ENCODE measurements at regions of chr2 and their contacts with region 1.

Region 1: DNA sequence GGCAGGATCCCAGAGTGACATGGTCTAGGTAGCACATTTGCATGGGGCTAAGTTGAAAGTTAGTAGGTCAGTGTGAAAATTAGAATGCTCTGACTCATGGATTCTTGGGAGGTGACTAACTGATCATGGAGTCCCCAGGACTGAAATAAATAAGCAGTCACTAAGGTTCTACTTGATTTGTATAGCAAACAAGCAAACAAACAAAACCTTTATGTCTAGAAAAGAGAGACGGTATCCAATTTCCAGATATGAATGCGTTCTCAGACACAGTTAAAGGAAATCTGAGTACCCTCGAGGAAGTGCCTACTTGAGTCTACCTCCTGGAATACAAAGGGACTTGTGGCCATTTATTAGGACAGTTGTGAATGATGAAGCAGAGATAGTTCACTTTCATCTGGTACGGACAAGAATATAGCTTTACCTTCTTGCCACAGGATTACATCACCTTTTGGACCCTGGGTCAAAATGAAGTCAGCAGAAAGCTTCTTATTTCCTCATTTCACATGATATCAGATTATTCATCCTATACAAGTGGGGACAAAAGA is 54.3 kb upstream of the AGPS start:
- DNase-seq: peak; percentile 41
- ATAC-seq: peak; percentile 63
- H3K4me3 ChIP-seq: no peak overlapping the region
- H3K27ac ChIP-seq: no peak overlapping the region
- H3K4me1 ChIP-seq: peaks cover 2% of the 10 kb centered on the region
- H3K27me3 ChIP-seq: no peaks in the 10 kb centered on the region
- CTCF ChIP-seq: no peak
- EP300 ChIP-seq: no peak
- POLR2A ChIP-seq: no peak
- RAD21 ChIP-seq: no peak

Region 2: GRCh38 chr2:175889701-175890302 is 1448.4 kb before region 1 on chr2:
- CTCF ChIA-PET with region 1: no interaction called
- POLR2A ChIA-PET with region 1: no interaction called
- in situ Hi-C with region 1: no loop called
- intact Hi-C with region 1: no loop called
- DNase-seq: no peak
- ATAC-seq: no peak
- H3K4me3 ChIP-seq: no peak overlapping the region
- H3K27ac ChIP-seq: no peak overlapping the region
- H3K4me1 ChIP-seq: no peaks in the 10 kb centered on the region
- H3K27me3 ChIP-seq: peaks cover 2 to 29% of the 10 kb centered on the region in 2 experiments; a peak in 3 of 5 replicates
- CTCF ChIP-seq: no peak
- EP300 ChIP-seq: no peak
- POLR2A ChIP-seq: no peak
- RAD21 ChIP-seq: no peak

Region 3: DNA sequence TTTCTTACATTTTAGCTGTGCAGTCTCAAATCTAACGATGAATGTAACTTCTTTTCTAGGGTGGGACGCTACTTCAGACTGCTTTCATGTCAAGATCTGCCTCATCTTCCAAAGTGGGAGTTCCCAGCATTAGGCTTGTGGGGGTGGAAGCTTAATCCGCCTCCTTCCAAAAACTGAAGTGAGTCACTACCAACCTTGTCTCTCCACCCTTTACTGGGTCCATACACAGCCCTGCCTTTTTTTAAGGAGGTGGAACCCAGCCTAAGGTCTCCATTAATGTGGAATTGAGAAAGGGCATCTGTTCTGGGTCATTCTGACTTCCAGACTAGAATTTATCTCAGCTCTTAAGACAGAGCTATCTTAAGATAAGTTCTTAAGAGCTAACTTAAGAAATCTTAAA is 31.7 kb before region 1 on chr2:
- CTCF ChIA-PET with region 1: no interaction called
- POLR2A ChIA-PET with region 1: no interaction called
- in situ Hi-C with region 1: no loop called
- intact Hi-C with region 1: no loop called
- DNase-seq: no peak
- ATAC-seq: no peak
- H3K4me3 ChIP-seq: no peak overlapping the region
- H3K27ac ChIP-seq: no peak overlapping the region
- H3K4me1 ChIP-seq: no peaks in the 10 kb centered on the region
- H3K27me3 ChIP-seq: no peaks in the 10 kb centered on the region
- CTCF ChIP-seq: no peak
- EP300 ChIP-seq: no peak
- POLR2A ChIP-seq: no peak
- RAD21 ChIP-seq: no peak

Region 4: GRCh38 chr2:177419274-177419673 is 81.0 kb after region 1 on chr2:
- CTCF ChIA-PET with region 1: interaction called, 95 read pairs
- POLR2A ChIA-PET with region 1: no interaction called
- in situ Hi-C with region 1: loop called (anchors 5 kb)
- intact Hi-C with region 1: loop called (anchors 1 kb)
- DNase-seq: no peak
- ATAC-seq: no peak
- H3K4me3 ChIP-seq: no peak overlapping the region
- H3K27ac ChIP-seq: no peak overlapping the region
- H3K4me1 ChIP-seq: peaks cover 58% of the 10 kb centered on the region
- H3K27me3 ChIP-seq: no peaks in the 10 kb centered on the region
- CTCF ChIP-seq: no peak
- EP300 ChIP-seq: no peak
- POLR2A ChIP-seq: no peak
- RAD21 ChIP-seq: no peak

Measured in HepG2 (cell line).